CD14-positive monocyte (primary cell): ENCODE measurements at regions of chr4 and their contacts with region 1.

Region 1: DNA sequence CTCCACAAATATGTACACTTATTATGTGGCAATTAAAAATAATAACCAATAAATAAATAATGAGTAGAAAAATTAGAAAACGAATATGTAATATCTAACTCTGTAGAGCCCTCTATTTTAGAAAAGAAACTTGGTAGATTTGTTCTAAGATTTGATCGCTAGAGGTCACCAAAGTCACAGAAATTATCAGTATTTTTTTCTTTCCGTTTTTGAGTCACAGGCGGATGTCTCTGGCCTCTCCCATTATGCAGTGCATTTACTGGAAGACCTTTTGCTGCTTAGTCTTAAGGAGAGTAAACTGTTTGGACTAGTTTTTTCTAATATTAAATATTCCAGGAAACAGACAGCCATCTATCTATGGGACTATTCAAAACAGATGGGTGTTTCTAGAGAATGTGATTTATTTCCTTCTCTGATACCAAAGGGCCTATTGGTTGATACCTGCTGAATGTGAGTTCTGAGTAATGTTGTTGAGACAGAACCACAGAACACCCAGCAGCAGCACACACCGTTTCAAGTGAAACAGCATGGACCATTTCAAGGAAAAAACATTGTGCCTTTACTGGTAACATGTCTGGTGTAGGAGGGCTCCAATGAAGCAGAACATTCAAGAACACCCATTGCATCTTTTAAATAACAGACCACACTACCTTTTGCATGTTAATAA is 34.0 kb upstream of the GYPA start:
- DNase-seq: peak; percentile 1 to 23 (median 10)
- H3K4me3 ChIP-seq: no peak overlapping the region
- H3K4me3 Mint-ChIP-seq: no peak overlapping the region
- H3K27ac ChIP-seq: no peak overlapping the region
- H3K27ac Mint-ChIP-seq: no peak overlapping the region
- H3K4me1 ChIP-seq: no peaks in the 10 kb centered on the region
- H3K4me1 Mint-ChIP-seq: no peaks in the 10 kb centered on the region
- H3K27me3 ChIP-seq: no peaks in the 10 kb centered on the region
- H3K27me3 Mint-ChIP-seq: peaks cover 0 to 2% (median 0%) of the 10 kb centered on the region in 3 donors
- CTCF ChIP-seq: peak; percentile 66

Region 2: GRCh38 chr4:145058256-145058655 is 883.7 kb after region 1 on chr4:
- intact Hi-C with region 1: loop called in 1 of 2 experiments (anchors 10 kb)
- DNase-seq: no peak
- H3K4me3 ChIP-seq: no peak overlapping the region
- H3K4me3 Mint-ChIP-seq: no peak overlapping the region
- H3K27ac ChIP-seq: no peak overlapping the region
- H3K27ac Mint-ChIP-seq: no peak overlapping the region
- H3K4me1 ChIP-seq: no peaks in the 10 kb centered on the region
- H3K4me1 Mint-ChIP-seq: peaks cover 3% of the 10 kb centered on the region
- H3K27me3 ChIP-seq: no peaks in the 10 kb centered on the region
- H3K27me3 Mint-ChIP-seq: peaks cover 0 to 1% (median 0%) of the 10 kb centered on the region in 3 donors
- CTCF ChIP-seq: no peak